Heart right ventricle (tissue), 16 donors: ENCODE measurements at regions of chr11 and their contacts with region 1.

Region 1: DNA sequence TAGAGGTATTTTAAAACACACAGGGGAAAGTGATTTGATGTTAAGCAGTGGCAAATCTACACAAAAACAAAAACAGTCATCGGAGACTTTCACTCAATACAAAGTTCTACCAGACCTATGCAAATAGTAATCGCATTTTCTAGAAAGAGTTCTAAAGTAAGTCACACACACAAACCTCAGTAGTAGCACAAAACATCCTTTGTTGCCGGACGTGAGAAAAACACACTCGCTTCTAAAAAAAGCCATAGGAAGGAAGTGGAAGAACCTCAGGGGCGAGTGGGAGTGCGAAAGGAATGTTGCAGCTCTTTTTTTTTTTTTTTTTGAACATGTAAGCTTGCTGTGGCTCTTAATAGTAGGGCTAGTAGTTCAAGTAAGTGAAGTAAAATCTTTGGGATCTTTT is 88.9 kb downstream of the MAML2 start:
- DNase-seq: peak in 1 of 2 donors; percentile 80
- ATAC-seq: peak in 7 of 8 donors; percentile 56 to 86 (median 73)
- H3K4me3 ChIP-seq: peak overlapping the region in 5 of 10 donors; percentile 5 to 37 (median 17)
- H3K27ac ChIP-seq: peak overlapping the region in 7 of 10 donors; percentile 32 to 79 (median 65)
- H3K4me1 ChIP-seq: peaks cover 17 to 67% (median 59%) of the 10 kb centered on the region in 9 donors
- H3K27me3 ChIP-seq: no peaks in the 10 kb centered on the region
- CTCF ChIP-seq: no peak

Region 2: GRCh38 chr11:96098514-96099241 is 155.4 kb before region 1 on chr11:
- intact Hi-C with region 1: no loop called
- DNase-seq: no peak
- ATAC-seq: peak in 5 of 8 donors; percentile 19 to 42 (median 41)
- H3K4me3 ChIP-seq: no peak overlapping the region
- H3K27ac ChIP-seq: peak overlapping the region; percentile 9 to 74 (median 42)
- H3K4me1 ChIP-seq: peaks cover 0 to 40% (median 20%) of the 10 kb centered on the region in 9 donors
- H3K27me3 ChIP-seq: no peaks in the 10 kb centered on the region
- CTCF ChIP-seq: no peak

Region 3: DNA sequence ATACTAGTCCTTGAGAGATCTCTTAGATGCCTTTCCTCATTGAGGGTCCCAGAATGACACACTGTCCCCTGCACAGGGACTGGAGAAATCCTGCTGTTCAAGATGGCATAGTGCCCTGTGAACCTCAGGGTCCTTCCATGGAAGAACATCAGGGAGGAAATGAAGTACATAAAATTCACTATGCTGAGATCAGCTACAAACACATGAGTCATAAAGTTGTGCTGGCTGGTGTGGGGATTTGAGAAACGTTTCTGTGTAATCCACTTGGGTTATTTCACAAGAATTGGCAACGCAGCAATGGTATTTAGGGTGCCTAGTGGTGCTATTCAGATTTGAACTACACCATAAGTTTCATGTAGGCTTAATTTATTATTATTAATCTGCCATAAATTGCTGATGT is 85.5 kb before region 1 on chr11:
- intact Hi-C with region 1: loop called in 1 of 10 experiments (anchors 10 kb)
- DNase-seq: peak in 1 of 2 donors; percentile 30
- ATAC-seq: peak; percentile 48 to 90 (median 68)
- H3K4me3 ChIP-seq: no peak overlapping the region
- H3K27ac ChIP-seq: peak overlapping the region in 8 of 10 donors; percentile 1 to 78 (median 36)
- H3K4me1 ChIP-seq: peaks cover 0 to 56% (median 31%) of the 10 kb centered on the region in 9 donors
- H3K27me3 ChIP-seq: no peaks in the 10 kb centered on the region
- CTCF ChIP-seq: no peak

Region 4: DNA sequence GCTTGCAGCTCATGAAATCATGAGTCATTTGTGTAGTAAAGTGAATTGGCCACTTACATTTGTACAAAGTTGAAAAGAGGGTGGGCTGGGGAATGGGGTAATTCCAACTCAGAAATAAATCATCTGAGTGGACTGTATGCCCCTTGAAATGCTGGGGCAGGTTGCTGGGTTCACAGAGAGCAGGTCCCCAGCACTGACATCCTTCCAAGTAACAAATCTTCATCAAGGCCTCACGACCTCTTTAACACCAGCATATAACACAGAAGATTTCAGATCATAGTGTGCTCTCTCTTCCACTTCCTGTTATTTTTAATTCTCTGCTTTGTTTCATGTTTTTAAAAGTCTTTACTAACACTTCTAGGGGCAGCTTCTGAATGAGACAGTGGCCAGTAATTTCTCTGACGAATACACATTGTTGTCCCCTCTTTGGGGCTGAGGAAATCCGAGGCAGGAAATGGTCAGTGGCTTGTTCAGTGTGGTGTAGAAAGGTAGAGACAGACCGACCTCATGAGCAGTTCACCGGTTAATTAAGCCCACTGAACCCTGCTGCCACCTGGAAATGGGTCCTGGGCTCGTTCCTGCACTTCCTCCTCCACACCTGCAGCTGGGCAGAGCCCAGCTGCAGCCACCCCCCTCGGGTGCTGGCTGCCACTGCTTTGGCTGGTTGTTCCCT is 38.8 kb before region 1 on chr11:
- intact Hi-C with region 1: loop called in 1 of 10 experiments (anchors 5 kb)
- DNase-seq: no peak
- ATAC-seq: peak in 6 of 8 donors; percentile 18 to 46 (median 39)
- H3K4me3 ChIP-seq: no peak overlapping the region
- H3K27ac ChIP-seq: peak overlapping the region in 9 of 10 donors; percentile 46 to 84 (median 71)
- H3K4me1 ChIP-seq: peaks cover 12 to 82% (median 73%) of the 10 kb centered on the region in 9 donors
- H3K27me3 ChIP-seq: no peaks in the 10 kb centered on the region
- CTCF ChIP-seq: no peak

Region 5: DNA sequence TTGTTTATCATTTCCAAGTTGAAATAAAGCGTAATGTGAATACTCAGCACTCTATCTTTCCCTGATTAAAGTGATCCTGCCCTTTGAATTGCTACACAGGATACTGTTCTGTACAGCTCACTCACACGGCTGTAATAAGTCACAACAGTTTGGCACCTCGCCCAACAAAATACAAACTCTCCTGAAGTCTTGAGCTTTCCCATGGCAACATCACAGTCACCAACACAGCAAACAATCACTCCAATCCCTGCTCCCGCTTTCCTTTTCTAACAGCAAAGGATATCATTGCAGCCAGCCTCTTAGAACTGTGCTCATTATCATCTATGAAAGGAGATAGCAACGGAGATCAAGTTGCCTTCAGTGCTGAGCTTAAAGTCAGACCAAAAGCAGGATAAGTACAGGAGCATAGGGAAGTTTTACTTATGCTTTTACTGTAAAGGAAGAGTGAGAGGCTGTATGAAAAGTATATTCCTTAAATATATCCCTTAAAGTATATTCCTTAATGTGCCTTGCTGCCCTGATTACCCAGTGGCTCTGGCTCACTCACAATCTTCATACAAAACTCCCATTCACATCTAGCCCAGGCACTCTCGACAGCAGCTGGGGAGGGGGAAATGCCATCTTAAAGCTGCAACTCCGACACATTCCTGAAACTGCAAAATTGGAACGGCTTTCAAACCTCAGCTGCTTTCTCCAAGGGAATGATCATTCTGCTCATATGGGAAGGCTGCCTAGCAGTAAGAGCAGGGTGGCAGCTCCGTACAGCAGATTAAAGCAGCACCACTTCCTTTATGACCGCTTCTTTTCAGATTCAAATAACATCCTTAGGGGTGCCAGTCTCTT is 53.1 kb after region 1 on chr11:
- intact Hi-C with region 1: loop called in 1 of 10 experiments (anchors 5 kb)
- DNase-seq: peak in 1 of 2 donors; percentile 96
- ATAC-seq: peak; percentile 92 to 98 (median 95)
- H3K4me3 ChIP-seq: peak overlapping the region in 9 of 10 donors; percentile 7 to 48 (median 34)
- H3K27ac ChIP-seq: peak overlapping the region; percentile 38 to 89 (median 79)
- H3K4me1 ChIP-seq: peaks cover 3 to 100% (median 78%) of the 10 kb centered on the region in 9 donors
- H3K27me3 ChIP-seq: no peaks in the 10 kb centered on the region
- CTCF ChIP-seq: no peak